HCT116 (cell line): ENCODE measurements at regions of chr3 and their contacts with region 1.

Region 1: DNA sequence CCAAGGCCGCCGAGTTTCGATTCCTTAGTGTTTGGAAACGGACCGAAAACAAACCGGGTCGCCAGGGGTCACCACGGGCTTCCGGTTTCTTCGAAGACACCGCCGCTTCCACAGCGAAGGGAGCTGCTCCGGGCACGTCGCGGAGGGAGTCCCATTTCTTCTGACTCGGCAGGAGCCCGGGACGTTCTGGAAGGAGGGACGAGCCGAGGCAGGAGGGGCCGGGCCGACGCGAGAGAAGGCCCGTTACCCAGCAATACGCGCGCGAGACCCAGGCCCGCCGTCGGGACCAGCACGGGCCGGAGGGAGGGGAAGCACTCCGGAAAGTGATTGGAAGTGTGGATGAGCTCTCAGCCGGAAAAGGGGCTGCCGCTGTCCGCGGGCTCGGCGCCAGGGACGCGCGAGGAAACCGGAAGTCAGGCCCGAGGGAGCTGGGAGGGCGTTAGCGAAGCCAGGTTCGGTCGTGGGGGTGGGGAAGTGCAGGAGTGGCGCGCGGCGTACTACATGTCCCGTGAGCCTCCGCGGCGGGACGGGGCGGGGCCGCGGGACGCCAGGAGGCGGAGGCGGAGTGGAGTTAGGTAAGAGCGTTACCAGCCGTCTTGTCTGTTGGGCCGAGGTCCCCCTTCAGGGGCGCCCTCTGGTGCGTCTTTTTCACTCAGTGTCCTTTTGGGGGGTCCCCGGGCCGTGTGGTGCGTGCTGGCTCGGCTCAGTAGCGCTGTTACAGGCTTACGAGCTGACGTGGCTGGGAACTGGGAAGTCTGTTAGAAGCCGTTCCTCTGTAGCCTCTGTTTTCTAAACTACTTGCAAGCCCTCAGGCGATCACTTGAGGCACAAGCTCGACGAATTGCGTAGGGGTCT is at the starts of genes AZI2 and ZCWPW2:
- DNase-seq: peak; percentile 87
- ATAC-seq: peak; percentile 89
- H3K4me3 ChIP-seq: peak within 1 kb of the TSS; percentile 76 to 83
- H3K27ac ChIP-seq: peak within 1 kb of the TSS; percentile 87
- H3K4me1 ChIP-seq: peaks cover 3 to 10% of the 10 kb centered on the region in 2 experiments; a peak in 2 of 4 replicates
- H3K27me3 ChIP-seq: no peaks in the 10 kb centered on the region
- CTCF ChIP-seq: 0 out of 6 replicates have a peak, but pooled peaks of 1 of the 3 experiments have one; percentile 8
- POLR2A ChIP-seq: peak; percentile 70
- RAD21 ChIP-seq: no peak
- total RNA-seq, gene AZI2: 51.6 TPM
- total RNA-seq, gene ZCWPW2: 1.1 TPM

Region 2: DNA sequence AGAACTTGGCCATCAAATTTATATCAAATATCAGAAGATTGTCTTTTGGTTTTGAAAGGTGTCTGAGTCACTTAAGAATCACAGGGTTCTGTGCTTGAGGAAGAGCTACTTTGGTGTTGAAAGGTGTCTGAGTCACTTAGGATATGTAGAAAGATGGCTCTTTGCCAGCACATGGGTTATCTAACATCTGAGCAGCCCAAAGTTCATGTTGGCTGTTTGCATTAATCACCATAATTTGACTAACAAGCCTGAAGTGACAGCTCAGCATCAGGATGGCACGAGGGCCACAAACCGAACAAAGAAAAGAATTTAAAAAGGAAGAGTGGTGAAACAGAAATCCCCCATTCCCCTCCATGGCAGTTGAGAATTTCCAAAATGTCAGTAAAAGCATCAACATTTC is 298.0 kb before region 1 on chr3:
- CTCF ChIA-PET with region 1: no interaction called
- POLR2A ChIA-PET with region 1: no interaction called
- RAD21 ChIA-PET with region 1: no interaction called
- intact Hi-C with region 1: loop called (anchors 10 kb)
- DNase-seq: peak; percentile 73
- ATAC-seq: peak; percentile 70
- H3K4me3 ChIP-seq: no peak overlapping the region
- H3K27ac ChIP-seq: no peak overlapping the region
- H3K4me1 ChIP-seq: peaks cover 9 to 53% of the 10 kb centered on the region in 2 experiments
- H3K27me3 ChIP-seq: no peaks in the 10 kb centered on the region
- CTCF ChIP-seq: no peak
- POLR2A ChIP-seq: no peak
- RAD21 ChIP-seq: no peak